ENCODE measurements at regions of chr1 and their contacts with region 1.

Region 1: GRCh38 chr1:56709269-56709880 is 64.3 kb downstream of the PRKAA2 start:
- DNase-seq: no peak
- ATAC-seq: peak; percentile 61

Region 2: DNA sequence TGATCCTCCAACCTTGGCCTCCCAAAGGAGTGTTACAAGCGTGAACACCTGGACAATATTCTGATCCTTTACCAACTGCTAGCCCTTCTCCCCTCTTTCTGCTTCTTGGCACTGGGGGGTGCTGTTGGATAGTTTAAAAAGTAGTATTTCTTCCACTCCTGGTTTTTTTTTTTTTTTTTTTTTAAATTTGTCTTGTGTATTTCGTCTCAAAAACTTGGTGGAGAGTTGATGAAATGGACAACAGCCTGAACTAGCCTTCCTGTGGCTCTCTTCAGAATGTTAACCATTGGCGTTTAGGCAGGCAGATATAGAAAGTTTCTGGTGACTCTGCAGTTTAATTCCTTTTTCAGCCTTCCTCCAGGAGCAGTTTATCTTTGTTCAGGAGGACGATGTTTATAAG is 1424.5 kb before region 1 on chr1:
- intact Hi-C with region 1: loop called in 1 of 2 experiments (anchors 10 kb)
- DNase-seq: peak in 1 of 2 donors; percentile 34
- ATAC-seq: peak; percentile 66

Measured in left colon (tissue), 2 donors.